Left cardiac atrium (tissue), 4 donors: ENCODE measurements at regions of chr3 and their contacts with region 1.

Region 1: GRCh38 chr3:170180908-170181879 is at the start of gene PHC3:
- DNase-seq: peak; percentile 94
- ATAC-seq: peak; percentile 95 to 97
- total RNA-seq, gene PHC3: 53.0 to 56.1 TPM

Region 2: GRCh38 chr3:170357176-170357919 is 176.2 kb after region 1 on chr3 and contains the start of gene SKIL:
- intact Hi-C with region 1: loop called in 1 of 2 experiments (anchors 10 kb)
- DNase-seq: peak; percentile 99
- ATAC-seq: peak; percentile 85 to 90
- total RNA-seq, gene SKIL: 19.8 to 46.5 TPM

Region 3: DNA sequence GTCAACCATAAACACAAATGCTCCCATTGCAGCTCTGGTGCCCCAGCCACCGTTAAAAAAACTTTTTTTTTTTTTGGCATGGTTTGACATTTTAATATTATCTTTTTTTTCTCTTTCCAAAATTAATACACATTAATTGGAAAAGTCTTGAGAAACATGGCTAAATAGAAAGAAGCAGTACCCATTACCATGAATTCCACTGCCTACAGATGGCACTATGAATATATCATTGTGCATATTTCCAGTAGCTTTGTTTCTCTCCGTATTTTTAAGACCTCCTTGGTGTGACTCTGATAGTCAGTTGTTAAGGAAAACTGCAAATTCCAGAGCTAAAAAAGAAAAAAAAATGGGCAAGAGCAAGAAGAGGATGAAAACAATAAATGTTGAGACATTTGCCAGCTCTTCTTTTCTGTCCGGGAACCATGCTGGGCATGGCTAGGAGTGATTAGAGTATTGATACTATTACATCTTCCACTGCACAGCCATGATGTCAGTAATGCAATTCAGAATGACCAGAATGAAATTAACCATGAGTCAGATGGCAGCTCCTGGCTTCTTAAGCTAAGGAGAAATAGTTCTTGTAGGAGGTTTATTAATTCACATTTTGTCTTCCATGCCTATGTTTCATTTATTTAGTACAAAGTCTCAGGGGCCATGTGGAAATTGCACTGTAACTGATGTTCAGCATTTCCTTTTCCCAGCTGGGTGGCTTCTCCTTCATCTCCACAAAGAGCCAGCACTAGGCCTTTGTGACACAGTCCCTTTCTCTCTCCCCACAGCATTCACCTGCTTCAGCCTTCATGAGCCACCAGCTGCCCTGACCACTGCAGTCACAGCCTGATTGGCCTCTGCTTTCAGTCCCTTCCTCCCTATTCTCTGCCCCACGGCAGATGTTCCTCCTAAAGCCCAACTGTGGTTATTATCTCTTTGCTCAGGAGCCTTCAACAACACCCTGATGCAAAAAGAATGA is 372.9 kb after region 1 on chr3:
- intact Hi-C with region 1: no loop called
- DNase-seq: no peak
- ATAC-seq: no peak